Activated naive CD4-positive, alpha-beta T cell treated with anti-CD3 and anti-CD28 coated beads for 36 hours (primary cell): ENCODE measurements at regions of chr6 and their contacts with region 1.

Region 1: DNA sequence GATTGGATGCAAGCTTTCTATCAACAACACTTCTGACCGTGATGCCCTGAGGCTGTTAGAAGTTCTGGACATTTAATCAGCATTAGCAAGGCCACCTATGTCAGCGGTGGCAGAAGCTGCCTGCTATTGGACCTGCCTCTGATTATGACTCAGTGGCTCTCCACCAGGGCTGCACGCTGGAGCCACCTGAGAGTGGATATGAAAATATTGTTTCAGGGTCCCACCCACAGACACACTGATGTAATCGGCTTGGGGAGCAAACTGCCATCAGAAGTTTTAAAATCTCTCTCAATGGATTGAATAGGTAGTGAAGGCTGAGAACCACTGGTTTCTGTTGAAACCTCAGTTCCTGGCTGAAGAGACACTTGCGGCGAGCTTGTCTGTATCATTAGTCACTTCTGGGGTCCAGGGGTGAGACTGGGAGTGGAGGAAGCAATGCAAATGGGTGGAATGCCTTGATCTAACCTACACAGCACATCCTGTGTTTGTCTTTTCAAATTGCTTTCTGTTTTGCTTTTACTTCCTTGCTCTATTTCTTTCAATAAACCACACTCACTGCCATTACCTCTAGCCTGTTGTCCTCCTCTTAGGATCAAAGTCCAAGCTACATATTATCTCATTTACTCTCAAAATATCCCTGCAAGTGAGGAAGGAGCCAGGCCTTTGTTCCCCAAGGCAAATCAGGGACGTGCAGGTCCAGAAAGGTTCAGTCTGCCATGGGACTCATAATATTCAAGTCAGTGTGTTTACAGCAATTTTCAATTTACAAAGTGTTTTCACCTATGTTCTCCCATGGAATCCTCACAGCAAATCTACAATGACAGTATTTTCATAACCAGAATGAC is 4.2 kb downstream of the CLIC5 start:
- DNase-seq: peak; percentile 78
- H3K4me3 Mint-ChIP-seq: no peak overlapping the region
- H3K27ac Mint-ChIP-seq: peak overlapping the region; percentile 72
- H3K4me1 Mint-ChIP-seq: peaks cover 45% of the 10 kb centered on the region
- H3K27me3 Mint-ChIP-seq: peaks cover 6% of the 10 kb centered on the region

Region 2: GRCh38 chr6:44809258-44809657 is 1202.2 kb before region 1 on chr6:
- CTCF ChIA-PET with region 1: no interaction called
- intact Hi-C with region 1: no loop called
- DNase-seq: no peak
- H3K4me3 Mint-ChIP-seq: no peak overlapping the region
- H3K27ac Mint-ChIP-seq: no peak overlapping the region
- H3K4me1 Mint-ChIP-seq: peaks cover 20% of the 10 kb centered on the region
- H3K27me3 Mint-ChIP-seq: no peaks in the 10 kb centered on the region

Region 3: DNA sequence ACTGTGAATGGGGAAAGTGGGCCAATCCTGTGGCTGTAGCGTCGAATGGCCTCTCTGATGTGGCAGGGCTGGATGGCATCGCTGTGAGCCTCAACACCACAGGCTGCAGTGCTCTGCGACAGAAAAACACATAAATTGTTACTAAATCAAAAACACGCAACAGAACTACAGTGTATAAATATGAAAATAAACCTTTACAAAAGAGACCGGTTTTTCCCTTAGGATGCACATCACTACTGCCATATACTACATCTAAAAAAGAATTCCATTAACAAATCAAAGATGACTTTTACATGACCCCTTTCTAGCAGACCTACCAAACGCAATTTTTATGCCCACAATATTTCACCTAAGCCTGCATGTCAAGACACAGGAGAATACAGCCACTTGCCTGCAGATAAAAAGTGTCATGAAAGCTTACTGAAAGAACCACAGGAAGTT is 1078.8 kb before region 1 on chr6:
- CTCF ChIA-PET with region 1: no interaction called
- intact Hi-C with region 1: loop called (anchors 10 kb)
- DNase-seq: peak; percentile 51
- H3K4me3 Mint-ChIP-seq: peak overlapping the region; percentile 78
- H3K27ac Mint-ChIP-seq: peak overlapping the region; percentile 91
- H3K4me1 Mint-ChIP-seq: peaks cover 49% of the 10 kb centered on the region
- H3K27me3 Mint-ChIP-seq: no peaks in the 10 kb centered on the region

Region 4: GRCh38 chr6:45479834-45480751 is 531.4 kb before region 1 on chr6:
- CTCF ChIA-PET with region 1: no interaction called
- intact Hi-C with region 1: loop called (anchors 10 kb)
- DNase-seq: no peak
- H3K4me3 Mint-ChIP-seq: no peak overlapping the region
- H3K27ac Mint-ChIP-seq: no peak overlapping the region
- H3K4me1 Mint-ChIP-seq: peaks cover 15% of the 10 kb centered on the region
- H3K27me3 Mint-ChIP-seq: no peaks in the 10 kb centered on the region

Region 5: DNA sequence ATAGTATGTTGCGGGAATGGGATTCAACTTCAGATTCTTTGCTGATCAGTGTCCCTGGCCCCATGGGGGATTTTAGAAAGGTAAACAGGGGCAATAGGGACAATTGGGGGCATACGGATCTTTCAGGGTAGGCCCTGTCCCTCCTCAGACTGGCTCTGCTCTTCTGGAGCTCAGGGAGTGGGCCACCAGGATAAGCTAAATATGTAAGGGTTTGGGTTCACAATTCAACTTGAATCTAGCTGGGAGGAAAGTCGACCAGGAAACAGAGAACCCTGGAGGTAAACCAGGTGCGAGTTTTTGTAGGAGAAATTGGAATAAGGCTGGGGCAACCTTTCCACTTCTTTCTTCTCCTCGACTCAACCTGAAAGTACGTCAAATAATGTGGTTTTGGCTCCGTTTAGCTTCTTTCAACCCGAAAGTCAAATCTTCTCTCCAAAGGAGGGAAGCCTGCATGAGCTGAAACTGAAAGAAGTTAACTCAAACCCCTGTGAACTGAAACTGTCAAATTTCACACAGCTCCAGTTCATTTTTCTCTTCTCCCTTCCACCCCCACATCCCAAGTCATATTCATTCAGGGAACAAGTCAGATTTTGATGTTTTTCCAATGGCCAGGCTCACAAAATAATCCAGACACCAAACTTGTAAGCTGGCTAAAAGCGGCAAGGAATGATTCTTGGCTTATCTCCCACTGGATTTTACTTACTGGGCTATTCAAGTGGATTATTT is 274.0 kb before region 1 on chr6:
- CTCF ChIA-PET with region 1: no interaction called
- intact Hi-C with region 1: loop called (anchors 5 kb)
- DNase-seq: peak; percentile 38
- H3K4me3 Mint-ChIP-seq: no peak overlapping the region
- H3K27ac Mint-ChIP-seq: peak overlapping the region; percentile 9
- H3K4me1 Mint-ChIP-seq: peaks cover 32% of the 10 kb centered on the region
- H3K27me3 Mint-ChIP-seq: peaks cover 29% of the 10 kb centered on the region

Region 6: DNA sequence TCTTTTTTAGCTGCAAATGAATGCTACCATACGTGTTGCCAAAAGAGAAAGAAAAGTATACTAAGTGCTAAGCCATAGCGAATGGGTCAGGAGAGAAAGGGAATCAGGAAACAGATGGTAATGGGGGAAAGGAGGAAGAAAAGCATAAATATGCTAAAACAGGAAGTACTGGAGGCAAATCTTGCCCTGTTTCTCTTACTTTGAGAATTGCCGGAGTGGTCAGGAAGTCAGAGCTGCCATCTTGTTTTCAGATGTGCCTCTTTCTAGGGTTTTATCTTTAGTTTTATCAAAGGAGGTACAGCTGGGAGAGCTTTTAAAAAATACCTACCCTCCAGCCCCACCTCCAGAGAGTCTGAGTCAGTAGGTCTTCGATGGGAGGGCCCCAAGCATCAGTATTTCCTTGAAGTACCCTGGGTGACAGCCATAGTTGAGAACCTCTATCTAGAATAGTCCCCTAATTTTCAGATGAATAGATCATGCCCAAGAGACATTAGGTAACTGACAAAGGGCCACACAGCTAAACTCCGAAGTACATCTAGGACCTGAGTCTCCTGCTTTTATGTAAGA is 189.1 kb before region 1 on chr6:
- CTCF ChIA-PET with region 1: no interaction called
- intact Hi-C with region 1: loop called (anchors 5 kb)
- DNase-seq: peak; percentile 59
- H3K4me3 Mint-ChIP-seq: peak overlapping the region; percentile 1
- H3K27ac Mint-ChIP-seq: peak overlapping the region; percentile 74
- H3K4me1 Mint-ChIP-seq: peaks cover 19% of the 10 kb centered on the region
- H3K27me3 Mint-ChIP-seq: peaks cover 4% of the 10 kb centered on the region

Region 7: GRCh38 chr6:45946352-45946751 is 65.1 kb before region 1 on chr6:
- CTCF ChIA-PET with region 1: no interaction called
- intact Hi-C with region 1: no loop called
- DNase-seq: no peak
- H3K4me3 Mint-ChIP-seq: no peak overlapping the region
- H3K27ac Mint-ChIP-seq: no peak overlapping the region
- H3K4me1 Mint-ChIP-seq: no peaks in the 10 kb centered on the region
- H3K27me3 Mint-ChIP-seq: no peaks in the 10 kb centered on the region

Region 8: DNA sequence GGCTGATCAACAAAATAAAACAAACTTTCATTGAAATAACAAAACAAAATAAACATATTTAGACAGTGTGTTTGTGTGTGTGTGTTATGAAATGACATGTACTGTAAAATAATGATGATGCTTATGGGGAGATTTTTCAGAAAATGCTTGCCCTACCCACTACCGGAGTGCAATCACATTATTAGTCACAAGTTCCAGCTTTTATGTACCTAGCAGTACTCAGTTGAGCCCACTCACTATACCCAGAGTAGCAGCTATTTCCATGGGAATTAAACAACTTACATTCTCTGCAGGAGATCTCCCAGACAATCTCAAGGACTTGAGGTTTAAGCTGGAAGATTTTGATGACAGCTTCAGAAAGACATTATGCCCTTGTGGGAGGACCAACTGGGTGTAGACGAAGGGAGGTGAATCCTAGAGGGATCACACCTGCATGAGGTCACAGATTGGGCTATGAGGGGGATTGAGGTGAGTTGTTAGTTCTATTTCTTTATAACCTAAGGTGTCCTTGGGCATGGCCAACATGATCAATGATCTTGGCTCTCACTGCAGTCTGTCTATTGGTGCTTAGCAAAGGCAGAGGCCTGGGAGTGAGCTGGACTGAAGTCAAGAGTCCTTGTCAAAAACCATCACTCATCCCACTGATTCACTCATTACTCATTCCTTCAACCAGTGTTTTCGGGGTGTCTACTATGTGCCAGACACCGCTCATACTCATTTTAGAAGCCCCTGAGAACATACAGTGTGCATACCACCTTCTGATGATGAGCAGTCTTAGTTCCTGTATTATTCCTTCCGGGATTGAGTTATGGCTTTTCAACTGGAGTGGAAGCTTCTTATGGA is 10.9 kb after region 1 on chr6:
- CTCF ChIA-PET with region 1: no interaction called
- intact Hi-C with region 1: loop called (anchors 1 kb)
- DNase-seq: no peak
- H3K4me3 Mint-ChIP-seq: no peak overlapping the region
- H3K27ac Mint-ChIP-seq: no peak overlapping the region
- H3K4me1 Mint-ChIP-seq: peaks cover 4% of the 10 kb centered on the region
- H3K27me3 Mint-ChIP-seq: peaks cover 2% of the 10 kb centered on the region

Region 9: GRCh38 chr6:46042355-46042999 is 31.0 kb after region 1 on chr6:
- CTCF ChIA-PET with region 1: no interaction called
- intact Hi-C with region 1: no loop called
- DNase-seq: peak; percentile 20
- H3K4me3 Mint-ChIP-seq: no peak overlapping the region
- H3K27ac Mint-ChIP-seq: no peak overlapping the region
- H3K4me1 Mint-ChIP-seq: peaks cover 4% of the 10 kb centered on the region
- H3K27me3 Mint-ChIP-seq: no peaks in the 10 kb centered on the region

Region 10: DNA sequence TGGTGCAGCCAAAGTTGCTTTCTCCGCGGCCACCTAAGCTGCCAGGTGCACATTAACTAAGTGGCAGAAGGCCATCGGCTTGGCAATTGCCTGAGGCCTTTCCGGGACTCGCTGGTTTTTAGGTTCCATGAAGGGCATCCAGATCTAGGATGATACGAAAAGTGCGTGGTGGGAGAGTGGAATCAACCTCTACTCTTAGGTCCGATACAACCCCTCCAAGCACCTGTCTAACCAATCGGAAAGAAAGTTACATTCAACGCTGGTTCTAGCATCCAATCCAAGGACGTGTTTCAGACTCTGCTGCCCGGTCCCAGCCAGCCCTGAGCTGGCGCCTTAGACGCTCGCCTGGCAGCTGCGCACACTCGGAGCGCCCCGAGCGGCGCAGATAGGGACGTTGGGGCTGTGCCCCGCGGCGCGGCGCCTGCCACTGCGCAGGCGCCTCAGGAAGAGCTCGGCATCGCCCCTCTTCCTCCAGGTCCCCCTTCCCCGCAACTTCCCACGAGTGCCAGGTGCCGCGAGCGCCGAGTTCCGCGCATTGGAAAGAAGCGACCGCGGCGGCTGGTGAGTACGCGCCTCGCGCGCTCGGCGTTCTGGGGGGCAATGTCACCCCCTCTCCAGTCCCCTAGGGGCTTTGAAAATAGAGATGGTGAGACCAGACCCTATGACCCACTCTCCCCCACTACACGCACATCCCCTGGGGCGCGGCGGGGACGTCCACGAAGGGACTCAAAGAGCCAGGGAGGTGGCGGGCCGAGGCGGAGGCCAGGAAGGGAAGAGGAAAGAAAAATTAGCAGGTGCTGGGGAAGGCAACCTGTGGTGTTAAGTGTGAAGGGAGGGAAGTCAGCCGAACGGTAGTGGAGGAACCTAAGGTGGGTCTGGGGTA is 118.4 kb after region 1 on chr6 and contains the start of gene ENPP4:
- CTCF ChIA-PET with region 1: no interaction called
- intact Hi-C with region 1: loop called (anchors 2 kb)
- DNase-seq: peak; percentile 91
- H3K4me3 Mint-ChIP-seq: peak within 1 kb of the TSS; percentile 92
- H3K27ac Mint-ChIP-seq: peak within 1 kb of the TSS; percentile 77
- H3K4me1 Mint-ChIP-seq: peaks cover 27% of the 10 kb centered on the region
- H3K27me3 Mint-ChIP-seq: no peaks in the 10 kb centered on the region
- total RNA-seq, gene ENPP4: 7.7 to 8.0 TPM